CD14-positive monocyte (primary cell): ENCODE measurements at regions of chr6 and their contacts with region 1.

Region 1: DNA sequence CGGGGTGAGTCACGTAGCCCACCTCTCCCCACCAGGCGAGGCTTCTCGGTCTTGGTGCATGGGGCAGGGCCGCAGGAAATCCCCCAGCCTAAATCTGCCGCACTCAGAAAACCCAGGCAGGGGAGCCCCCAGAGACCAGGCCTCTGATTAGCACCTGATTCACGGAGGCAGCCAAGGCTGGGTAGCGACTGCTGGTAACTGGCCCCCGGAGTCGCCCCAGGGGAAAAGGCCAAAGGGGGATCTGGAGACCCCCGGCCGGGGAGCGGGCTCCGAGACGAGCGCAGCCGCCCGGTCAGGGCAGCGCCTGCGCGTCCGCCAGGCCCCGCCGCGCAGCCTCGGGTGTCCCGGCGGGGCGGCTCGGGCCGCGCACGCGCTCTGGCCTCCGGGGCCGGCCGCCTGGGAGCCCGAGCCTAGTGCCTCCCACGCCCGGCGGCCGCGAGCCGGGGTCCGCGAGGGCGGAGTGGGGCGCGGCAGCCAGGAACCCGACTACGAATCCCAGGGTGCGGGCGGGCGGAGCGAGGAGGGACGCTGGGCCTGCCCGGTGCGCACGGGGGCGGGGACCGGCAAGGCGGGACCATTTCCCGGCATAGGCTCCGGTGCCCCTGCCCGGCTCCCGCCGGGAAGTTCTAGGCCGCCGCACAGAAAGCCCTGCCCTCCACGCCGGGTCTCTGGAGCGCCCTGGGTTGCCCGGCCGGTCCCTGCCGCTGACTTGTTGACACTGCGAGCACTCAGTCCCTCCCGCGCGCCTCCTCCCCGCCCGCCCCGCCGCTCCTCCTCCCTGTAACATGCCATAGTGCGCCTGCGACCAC is at the start of gene DUSP22:
- DNase-seq: peak; percentile 69 to 93 (median 80)
- H3K4me3 ChIP-seq: peak within 1 kb of the TSS; percentile 65 to 79 (median 72)
- H3K4me3 Mint-ChIP-seq: peak within 1 kb of the TSS; percentile 87 to 93
- H3K27ac ChIP-seq: peak within 1 kb of the TSS; percentile 92 to 98
- H3K27ac Mint-ChIP-seq: peak within 1 kb of the TSS; percentile 94 to 98 (median 96)
- H3K4me1 ChIP-seq: peaks cover 91 to 94% of the 10 kb centered on the region in 2 donors
- H3K4me1 Mint-ChIP-seq: peaks cover 58% of the 10 kb centered on the region
- H3K27me3 ChIP-seq: no peaks in the 10 kb centered on the region
- H3K27me3 Mint-ChIP-seq: peaks cover 0 to 3% (median 2%) of the 10 kb centered on the region in 3 donors
- CTCF ChIP-seq: no peak
- polyA plus RNA-seq, gene DUSP22: 107 to 120 (median 117) TPM

Region 2: DNA sequence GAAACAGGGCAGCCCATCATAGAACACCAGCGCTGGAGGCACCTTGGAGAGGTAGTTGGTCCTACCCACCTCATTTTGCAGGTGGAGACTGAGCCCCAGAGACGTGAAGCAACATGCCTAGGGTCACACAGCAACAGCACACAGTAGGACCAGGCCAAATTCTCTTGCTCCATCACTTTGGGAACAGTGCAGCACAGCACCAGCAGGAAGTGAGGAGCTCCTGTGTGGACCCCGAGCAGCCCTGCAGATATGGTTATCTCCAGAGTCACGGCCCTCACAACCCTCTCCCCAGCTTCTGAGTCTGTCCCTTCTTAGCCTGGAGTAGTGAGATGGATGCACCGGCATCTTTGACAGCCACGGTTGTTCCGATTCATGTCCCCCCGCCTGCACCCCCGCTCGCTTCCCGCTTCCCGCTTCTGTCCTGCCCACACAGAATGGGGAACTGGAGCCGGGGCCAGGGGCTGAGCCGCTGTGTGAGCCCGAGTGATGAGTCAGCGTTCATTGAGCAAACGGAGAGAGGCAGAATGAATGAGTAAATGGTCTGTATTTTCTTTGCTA is 72.2 kb before region 1 on chr6:
- intact Hi-C with region 1: loop called in 1 of 2 experiments (anchors 5 kb)
- DNase-seq: peak; percentile 90 to 95 (median 92)
- H3K4me3 ChIP-seq: peak overlapping the region in 1 of 3 experiments; percentile 54
- H3K4me3 Mint-ChIP-seq: peak overlapping the region; percentile 46 to 57
- H3K27ac ChIP-seq: no peak overlapping the region
- H3K27ac Mint-ChIP-seq: peak overlapping the region in 3 of 7 donors; percentile 37 to 70 (median 70)
- H3K4me1 ChIP-seq: peaks cover 34 to 41% of the 10 kb centered on the region in 2 donors
- H3K4me1 Mint-ChIP-seq: peaks cover 42% of the 10 kb centered on the region
- H3K27me3 ChIP-seq: no peaks in the 10 kb centered on the region
- H3K27me3 Mint-ChIP-seq: peaks cover 1 to 4% (median 3%) of the 10 kb centered on the region in 3 donors
- CTCF ChIP-seq: no peak

Region 3: DNA sequence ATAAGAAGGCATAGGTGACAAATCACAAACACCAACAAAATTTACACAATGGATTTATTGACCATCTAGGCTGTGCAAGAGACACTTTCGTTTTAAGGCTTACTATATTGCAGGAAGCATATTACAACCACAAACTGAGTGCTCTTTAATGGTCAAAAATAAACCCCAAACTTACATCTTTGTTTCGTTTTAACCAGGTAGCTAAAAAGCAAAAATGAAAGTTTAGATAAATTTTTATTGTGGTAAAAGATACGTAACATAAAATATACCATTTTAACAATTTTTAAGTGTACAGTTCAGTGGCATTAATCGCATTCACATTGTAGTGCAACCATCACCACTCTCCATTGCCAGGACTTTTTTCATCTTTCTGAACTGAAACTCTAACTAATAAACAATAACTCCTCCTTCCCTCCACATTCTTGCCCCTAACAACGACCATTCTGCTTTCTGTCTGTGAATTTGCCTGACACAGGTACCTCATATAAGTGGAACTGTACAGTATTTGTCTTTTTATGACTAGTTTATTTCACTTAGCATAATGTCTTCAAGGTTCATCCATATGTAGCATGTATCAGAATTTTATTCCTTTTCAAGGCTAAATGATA is 31.9 kb before region 1 on chr6:
- intact Hi-C with region 1: loop called (anchors 2 to 5 kb)
- DNase-seq: no peak
- H3K4me3 ChIP-seq: no peak overlapping the region
- H3K4me3 Mint-ChIP-seq: no peak overlapping the region
- H3K27ac ChIP-seq: no peak overlapping the region
- H3K27ac Mint-ChIP-seq: peak overlapping the region in 1 of 7 donors; percentile 44
- H3K4me1 ChIP-seq: peaks cover 34 to 36% of the 10 kb centered on the region in 2 donors
- H3K4me1 Mint-ChIP-seq: peaks cover 36% of the 10 kb centered on the region
- H3K27me3 ChIP-seq: no peaks in the 10 kb centered on the region
- H3K27me3 Mint-ChIP-seq: peaks cover 3 to 4% (median 3%) of the 10 kb centered on the region in 3 donors
- CTCF ChIP-seq: no peak

Region 4: DNA sequence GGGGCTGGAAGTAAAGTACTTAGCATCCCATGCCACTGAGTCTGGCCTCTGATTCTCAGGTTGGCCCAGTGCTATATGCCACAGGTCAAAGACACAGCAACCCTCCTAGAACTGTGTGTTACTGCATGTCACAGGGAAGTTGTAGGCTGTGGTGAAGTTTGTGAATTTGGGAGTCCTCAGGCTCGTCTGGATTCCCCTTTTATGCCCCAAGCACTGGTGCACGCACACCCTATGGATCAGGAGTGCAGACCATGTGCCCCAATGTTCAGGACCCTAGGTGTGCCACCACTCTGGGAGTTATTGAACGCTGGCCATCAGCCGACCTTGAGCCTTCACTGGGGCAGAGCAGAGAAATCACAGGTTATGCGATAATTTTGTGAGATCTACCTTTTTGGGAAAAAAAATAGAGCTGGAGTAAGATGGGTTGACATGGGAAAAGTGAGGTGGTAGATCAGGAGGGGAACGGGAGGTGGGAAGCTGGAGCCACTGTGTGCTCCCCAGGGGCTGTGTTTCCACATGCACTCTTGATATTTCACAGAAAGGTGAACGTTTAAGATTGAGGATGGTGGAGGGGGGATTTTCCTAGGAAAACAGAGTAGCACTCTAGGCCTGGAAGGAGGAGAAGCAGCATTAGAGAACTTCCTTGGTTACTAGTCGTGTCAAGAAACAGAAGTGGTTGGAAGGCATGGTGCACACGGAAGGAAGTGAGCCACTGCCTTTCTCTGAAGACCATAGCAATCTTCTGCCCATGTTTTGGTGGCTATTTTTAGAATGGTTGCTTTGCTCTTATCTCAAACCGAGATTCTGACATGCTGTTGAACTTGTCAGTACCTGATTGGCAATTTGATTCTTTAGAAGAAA is 44.5 kb after region 1 on chr6:
- intact Hi-C with region 1: loop called (anchors 5 kb)
- DNase-seq: peak; percentile 80 to 86 (median 84)
- H3K4me3 ChIP-seq: peak overlapping the region in 2 of 3 experiments; percentile 14 to 62
- H3K4me3 Mint-ChIP-seq: peak overlapping the region; percentile 38 to 72
- H3K27ac ChIP-seq: peak overlapping the region; percentile 84 to 87
- H3K27ac Mint-ChIP-seq: peak overlapping the region; percentile 85 to 98 (median 94)
- H3K4me1 ChIP-seq: peaks cover 88 to 92% of the 10 kb centered on the region in 2 donors
- H3K4me1 Mint-ChIP-seq: peaks cover 72% of the 10 kb centered on the region
- H3K27me3 ChIP-seq: no peaks in the 10 kb centered on the region
- H3K27me3 Mint-ChIP-seq: peaks cover 1 to 8% (median 2%) of the 10 kb centered on the region in 3 donors
- CTCF ChIP-seq: no peak

Region 5: GRCh38 chr6:636488-636887 is 344.6 kb after region 1 on chr6:
- intact Hi-C with region 1: no loop called
- DNase-seq: no peak
- H3K4me3 ChIP-seq: no peak overlapping the region
- H3K4me3 Mint-ChIP-seq: no peak overlapping the region
- H3K27ac ChIP-seq: no peak overlapping the region
- H3K27ac Mint-ChIP-seq: no peak overlapping the region
- H3K4me1 ChIP-seq: no peaks in the 10 kb centered on the region
- H3K4me1 Mint-ChIP-seq: no peaks in the 10 kb centered on the region
- H3K27me3 ChIP-seq: no peaks in the 10 kb centered on the region
- H3K27me3 Mint-ChIP-seq: peaks cover 0 to 2% (median 0%) of the 10 kb centered on the region in 3 donors
- CTCF ChIP-seq: no peak